Naive thymus-derived CD4-positive, alpha-beta T cell (primary cell): ENCODE measurements at regions of chr7 and their contacts with region 1.

Region 1: GRCh38 chr7:141023295-141023694 is 8.5 kb upstream of the MRPS33 start:
- DNase-seq: peak in 5 of 9 donors; percentile 30 to 58 (median 37)
- ATAC-seq: peak; percentile 31
- H3K4me3 ChIP-seq: no peak overlapping the region
- H3K4me3 Mint-ChIP-seq: peak overlapping the region in 8 of 10 donors; percentile 14 to 68 (median 44)
- H3K27ac ChIP-seq: no peak overlapping the region
- H3K27ac Mint-ChIP-seq: peak overlapping the region; percentile 66 to 85 (median 76)
- H3K4me1 ChIP-seq: peaks cover 0 to 7% of the 10 kb centered on the region in 2 donors
- H3K4me1 Mint-ChIP-seq: peaks cover 8 to 30% (median 23%) of the 10 kb centered on the region in 7 donors
- H3K27me3 ChIP-seq: no peaks in the 10 kb centered on the region
- H3K27me3 Mint-ChIP-seq: peaks cover 0 to 32% (median 9%) of the 10 kb centered on the region in 5 donors

Region 2: GRCh38 chr7:140972876-140973859 is 50.1 kb before region 1 on chr7:
- CTCF ChIA-PET with region 1: no interaction called
- POLR2A ChIA-PET with region 1: no interaction called
- intact Hi-C with region 1: no loop called
- DNase-seq: no peak
- ATAC-seq: no peak
- H3K4me3 ChIP-seq: no peak overlapping the region
- H3K4me3 Mint-ChIP-seq: no peak overlapping the region
- H3K27ac ChIP-seq: no peak overlapping the region
- H3K27ac Mint-ChIP-seq: no peak overlapping the region
- H3K4me1 ChIP-seq: no peaks in the 10 kb centered on the region
- H3K4me1 Mint-ChIP-seq: peaks cover 0 to 5% (median 0%) of the 10 kb centered on the region in 7 donors
- H3K27me3 ChIP-seq: no peaks in the 10 kb centered on the region
- H3K27me3 Mint-ChIP-seq: peaks cover 0 to 5% (median 0%) of the 10 kb centered on the region in 5 donors

Region 3: DNA sequence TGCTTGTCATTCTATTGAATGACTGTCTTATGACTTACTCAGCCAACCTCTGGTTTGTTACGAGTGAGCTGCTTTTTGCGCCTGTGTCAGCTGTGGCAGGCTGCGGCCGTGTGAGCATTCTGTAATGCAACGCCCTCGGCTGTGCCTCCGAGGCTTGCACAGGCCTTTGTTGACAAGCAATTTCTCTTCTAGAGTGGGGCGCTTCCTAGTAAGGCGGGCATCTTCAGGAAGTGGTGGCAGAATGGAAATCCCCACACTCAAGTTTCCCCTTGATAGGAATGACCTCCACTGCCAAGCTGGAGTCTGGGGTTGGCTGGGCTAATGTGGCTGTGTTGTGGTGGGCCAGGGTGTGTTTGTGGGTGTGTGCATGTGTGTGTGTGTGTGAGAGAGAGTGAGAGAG is 30.3 kb after region 1 on chr7:
- CTCF ChIA-PET with region 1: no interaction called
- POLR2A ChIA-PET with region 1: no interaction called
- intact Hi-C with region 1: loop called in 1 of 2 experiments (anchors 1 kb)
- DNase-seq: peak; percentile 12 to 62 (median 41)
- ATAC-seq: peak; percentile 96
- H3K4me3 ChIP-seq: no peak overlapping the region
- H3K4me3 Mint-ChIP-seq: peak overlapping the region in 8 of 10 donors; percentile 8 to 63 (median 40)
- H3K27ac ChIP-seq: no peak overlapping the region
- H3K27ac Mint-ChIP-seq: peak overlapping the region; percentile 48 to 90 (median 76)
- H3K4me1 ChIP-seq: peaks cover 7 to 9% of the 10 kb centered on the region in 2 donors
- H3K4me1 Mint-ChIP-seq: peaks cover 3 to 26% (median 19%) of the 10 kb centered on the region in 7 donors
- H3K27me3 ChIP-seq: no peaks in the 10 kb centered on the region
- H3K27me3 Mint-ChIP-seq: peaks cover 0 to 29% (median 10%) of the 10 kb centered on the region in 5 donors

Region 4: DNA sequence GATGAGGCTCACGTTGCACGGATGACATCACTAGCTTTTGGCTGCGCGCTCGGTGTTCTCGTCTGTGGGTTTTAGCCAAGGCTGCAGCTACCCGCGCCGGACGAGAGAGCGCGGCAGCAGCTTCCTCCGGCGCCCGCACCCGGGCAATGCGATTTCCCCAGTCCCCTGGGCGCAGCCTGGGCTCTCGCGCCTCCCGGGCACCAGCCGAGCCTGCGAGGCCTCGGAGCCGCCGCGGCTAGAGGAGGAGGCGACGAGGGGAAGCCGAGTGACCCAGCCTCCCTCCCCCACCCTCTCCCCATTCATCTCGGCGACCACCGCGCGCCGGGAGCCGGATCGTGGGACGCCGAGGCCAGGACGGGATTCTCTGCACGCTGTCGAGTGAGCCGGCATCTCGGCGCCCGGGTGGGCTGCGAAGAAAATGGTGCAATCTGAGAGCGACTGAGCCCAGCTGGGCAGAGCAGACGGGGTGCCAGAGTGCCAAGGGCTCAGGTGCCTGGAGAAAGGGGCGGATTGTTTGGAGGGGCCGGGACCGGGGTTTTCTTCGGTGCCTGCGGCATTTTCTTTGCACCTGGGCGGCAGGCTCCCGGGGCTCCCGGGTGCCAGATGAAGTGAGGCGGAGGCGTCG is 49.4 kb after region 1 on chr7:
- CTCF ChIA-PET with region 1: no interaction called
- POLR2A ChIA-PET with region 1: no interaction called
- intact Hi-C with region 1: loop called in 1 of 2 experiments (anchors 2 kb)
- DNase-seq: peak in 5 of 9 donors; percentile 2 to 39 (median 5)
- ATAC-seq: peak; percentile 45
- H3K4me3 ChIP-seq: peak overlapping the region; percentile 42
- H3K4me3 Mint-ChIP-seq: peak overlapping the region; percentile 74 to 92 (median 86)
- H3K27ac ChIP-seq: no peak overlapping the region
- H3K27ac Mint-ChIP-seq: no peak overlapping the region
- H3K4me1 ChIP-seq: peaks cover 5 to 6% of the 10 kb centered on the region in 2 donors
- H3K4me1 Mint-ChIP-seq: peaks cover 17 to 30% (median 28%) of the 10 kb centered on the region in 7 donors
- H3K27me3 ChIP-seq: peaks cover 4 to 31% of the 10 kb centered on the region in 2 donors
- H3K27me3 Mint-ChIP-seq: peaks cover 42 to 49% (median 48%) of the 10 kb centered on the region in 5 donors